Heart left ventricle (tissue), 16 donors: ENCODE measurements at regions of chr2 and their contacts with region 1.

Region 1: DNA sequence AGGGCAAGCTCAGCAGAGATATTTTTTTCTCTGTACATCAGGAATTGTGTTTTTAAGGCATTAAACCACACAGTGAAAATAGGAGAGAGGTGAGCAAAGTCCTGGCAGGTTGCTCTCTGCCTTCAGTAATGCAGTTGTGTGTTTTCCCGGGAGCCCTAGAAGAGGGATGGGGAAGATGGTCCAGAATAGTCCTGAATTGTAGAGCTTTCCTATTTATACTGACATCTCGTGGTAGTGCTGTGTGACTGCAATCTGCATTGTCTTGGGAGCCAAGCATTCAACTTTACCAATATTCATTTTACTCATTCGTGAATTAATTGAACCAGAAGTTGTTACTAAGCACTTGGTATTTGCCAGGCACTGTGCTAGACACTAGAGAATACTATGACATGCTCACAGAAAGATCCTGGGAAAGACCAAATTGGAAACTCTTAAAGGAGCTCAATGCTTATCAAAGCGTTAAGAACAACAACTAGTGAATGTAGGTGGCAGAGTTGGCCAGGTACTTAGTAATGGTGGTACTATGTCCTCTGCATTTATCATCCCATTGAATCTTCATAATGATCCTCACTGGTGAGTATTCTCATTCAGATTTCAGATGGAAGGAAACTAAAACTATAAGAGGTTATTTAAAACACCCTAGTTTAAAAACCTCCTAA is 214.6 kb downstream of the TRIB2 start:
- DNase-seq: peak in 2 of 5 donors; percentile 23 to 29
- ATAC-seq: peak; percentile 78 to 92 (median 88)
- H3K4me3 ChIP-seq: no peak overlapping the region
- H3K27ac ChIP-seq: peak overlapping the region in 8 of 12 donors; percentile 2 to 45 (median 16)
- H3K4me1 ChIP-seq: peaks cover 6 to 45% (median 25%) of the 10 kb centered on the region in 12 donors
- H3K27me3 ChIP-seq: no peaks in the 10 kb centered on the region
- CTCF ChIP-seq: peak; percentile 81 to 95 (median 93)
- POLR2A ChIP-seq: no peak

Region 2: DNA sequence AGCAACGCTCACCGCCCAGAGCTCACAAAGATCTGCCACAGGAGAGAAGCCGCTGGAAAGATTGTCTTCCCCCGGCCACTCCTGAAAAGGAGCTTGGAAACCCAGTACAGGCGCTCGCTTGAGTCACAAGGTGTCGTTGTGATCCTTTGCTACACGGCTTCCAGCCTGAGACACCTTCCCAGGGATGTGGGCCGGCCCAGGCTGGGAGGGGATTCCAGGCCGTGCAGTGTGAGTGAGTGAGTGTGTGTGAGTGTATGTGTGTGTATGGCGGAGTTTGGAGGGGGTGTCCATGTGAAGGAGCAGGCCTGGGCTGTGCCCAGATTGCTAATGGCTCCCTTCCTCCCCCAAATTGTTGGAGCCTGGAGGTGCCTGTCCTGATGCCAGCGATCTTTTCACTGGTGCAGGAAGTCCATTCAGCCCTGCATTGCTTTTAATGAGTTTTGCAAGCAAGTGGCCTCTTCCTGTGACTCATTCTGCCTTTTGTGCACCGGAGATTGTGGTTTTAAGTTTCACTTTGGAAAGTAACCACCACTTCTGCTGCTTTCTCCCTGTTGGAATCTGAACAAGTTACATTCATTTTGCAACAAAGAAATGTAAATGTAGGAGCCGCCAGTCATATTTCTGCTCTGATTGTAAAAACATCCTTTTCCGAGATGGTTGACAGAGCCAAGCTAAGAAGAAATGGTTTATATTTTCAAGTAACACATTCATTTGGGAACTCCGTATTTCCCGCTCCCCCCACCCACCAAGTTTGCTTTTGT is 1101.2 kb before region 1 on chr2:
- intact Hi-C with region 1: loop called in 9 of 10 experiments (anchors 1 to 10 kb)
- DNase-seq: peak; percentile 69 to 79 (median 75)
- ATAC-seq: peak; percentile 85 to 92 (median 88)
- H3K4me3 ChIP-seq: peak overlapping the region in 10 of 12 donors; percentile 9 to 42 (median 24)
- H3K27ac ChIP-seq: peak overlapping the region in 11 of 12 donors; percentile 55 to 82 (median 71)
- H3K4me1 ChIP-seq: peaks cover 4 to 37% (median 21%) of the 10 kb centered on the region in 12 donors
- H3K27me3 ChIP-seq: no peaks in the 10 kb centered on the region
- CTCF ChIP-seq: peak in 9 of 12 donors; percentile 21 to 55 (median 39)
- POLR2A ChIP-seq: no peak

Region 3: GRCh38 chr2:12169721-12170120 is 761.6 kb before region 1 on chr2:
- intact Hi-C with region 1: loop called in 2 of 10 experiments (anchors 5 to 10 kb)
- DNase-seq: peak in 4 of 5 donors; percentile 63 to 69 (median 66)
- ATAC-seq: peak; percentile 37 to 92 (median 76)
- H3K4me3 ChIP-seq: no peak overlapping the region
- H3K27ac ChIP-seq: peak overlapping the region in 11 of 12 donors; percentile 48 to 87 (median 66)
- H3K4me1 ChIP-seq: peaks cover 14 to 33% (median 26%) of the 10 kb centered on the region in 12 donors
- H3K27me3 ChIP-seq: no peaks in the 10 kb centered on the region
- CTCF ChIP-seq: no peak
- POLR2A ChIP-seq: no peak

Region 4: GRCh38 chr2:12721566-12722446 is 209.5 kb before region 1 on chr2:
- intact Hi-C with region 1: loop called (anchors 1 to 5 kb)
- DNase-seq: no peak
- ATAC-seq: no peak
- H3K4me3 ChIP-seq: peak overlapping the region; percentile 68 to 97 (median 87)
- H3K27ac ChIP-seq: peak overlapping the region in 11 of 12 donors; percentile 91 to 100 (median 96)
- H3K4me1 ChIP-seq: peaks cover 9 to 66% (median 57%) of the 10 kb centered on the region in 12 donors
- H3K27me3 ChIP-seq: no peaks in the 10 kb centered on the region
- CTCF ChIP-seq: no peak
- POLR2A ChIP-seq: no peak

Region 5: DNA sequence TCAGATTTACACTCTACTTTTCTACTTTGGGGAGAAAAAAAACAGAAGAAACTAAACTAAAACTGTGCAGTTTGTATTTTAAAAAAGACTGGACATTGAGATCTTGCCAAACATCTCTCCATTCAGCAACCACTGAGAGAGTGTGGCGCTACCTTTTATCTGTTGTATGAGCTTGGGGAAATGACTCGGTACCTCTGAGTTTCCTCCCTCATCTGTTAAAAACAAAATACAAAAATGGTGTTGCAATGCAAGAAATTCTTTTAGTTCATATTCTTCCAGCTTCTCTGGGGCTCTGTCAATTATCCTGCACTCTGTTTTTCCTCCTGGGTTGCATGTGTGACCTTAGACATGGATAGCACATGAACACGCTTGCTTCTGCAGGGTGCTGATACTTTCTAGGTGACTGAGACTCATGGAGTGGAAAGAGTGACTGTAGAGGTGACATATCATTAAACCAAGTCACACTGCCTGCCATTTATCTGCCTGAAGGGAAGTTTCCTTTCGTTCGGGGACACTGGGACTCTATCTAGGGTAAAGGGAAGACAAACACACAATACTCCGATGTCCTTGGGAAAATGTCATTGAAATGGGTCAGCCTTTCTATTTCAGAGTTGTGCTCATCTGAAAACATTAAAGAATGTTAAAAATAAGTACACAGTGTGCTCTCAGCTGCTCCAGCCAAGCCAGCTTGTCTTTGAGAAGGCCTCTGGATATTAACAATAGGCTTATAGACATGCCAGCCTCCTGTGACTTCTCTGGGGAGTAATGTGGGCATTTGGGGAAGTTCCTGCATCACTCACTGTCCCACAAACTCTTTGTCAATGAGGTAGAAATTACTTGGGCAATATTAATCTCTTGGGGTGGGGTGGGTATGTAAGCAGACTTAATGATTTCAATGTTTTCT is 123.2 kb before region 1 on chr2:
- intact Hi-C with region 1: loop called in 2 of 10 experiments (anchors 5 kb)
- DNase-seq: peak in 2 of 5 donors; percentile 41 to 48
- ATAC-seq: peak; percentile 74 to 90 (median 84)
- H3K4me3 ChIP-seq: no peak overlapping the region
- H3K27ac ChIP-seq: peak overlapping the region; percentile 42 to 87 (median 72)
- H3K4me1 ChIP-seq: peaks cover 9 to 58% (median 44%) of the 10 kb centered on the region in 12 donors
- H3K27me3 ChIP-seq: no peaks in the 10 kb centered on the region
- CTCF ChIP-seq: no peak
- POLR2A ChIP-seq: peak in 1 of 2 donors; percentile 17

Region 6: GRCh38 chr2:12824351-12824777 is 107.0 kb before region 1 on chr2:
- intact Hi-C with region 1: loop called in 6 of 10 experiments (anchors 5 to 10 kb)
- DNase-seq: peak in 4 of 5 donors; percentile 58 to 79 (median 70)
- ATAC-seq: peak; percentile 48 to 81 (median 67)
- H3K4me3 ChIP-seq: peak overlapping the region in 1 of 12 donors; percentile 10
- H3K27ac ChIP-seq: peak overlapping the region; percentile 79 to 95 (median 86)
- H3K4me1 ChIP-seq: peaks cover 9 to 49% (median 36%) of the 10 kb centered on the region in 12 donors
- H3K27me3 ChIP-seq: no peaks in the 10 kb centered on the region
- CTCF ChIP-seq: no peak
- POLR2A ChIP-seq: no peak